Caco-2 (cell line): ENCODE measurements at regions of chr3 and their contacts with region 1.

Region 1: GRCh38 chr3:156535162-156535627 is 19.7 kb downstream of the SSR3 start:
- DNase-seq: peak; percentile 76 to 79
- H3K4me3 ChIP-seq: no peak overlapping the region
- H3K4me3 Mint-ChIP-seq: peak overlapping the region; percentile 1
- H3K27ac Mint-ChIP-seq: peak overlapping the region; percentile 56
- H3K4me1 ChIP-seq: peaks cover 28% of the 10 kb centered on the region
- H3K4me1 Mint-ChIP-seq: peaks cover 15% of the 10 kb centered on the region
- H3K27me3 ChIP-seq: no peaks in the 10 kb centered on the region
- H3K27me3 Mint-ChIP-seq: no peaks in the 10 kb centered on the region
- CTCF ChIP-seq: peak in 1 of 2 experiments; percentile 24

Region 2: DNA sequence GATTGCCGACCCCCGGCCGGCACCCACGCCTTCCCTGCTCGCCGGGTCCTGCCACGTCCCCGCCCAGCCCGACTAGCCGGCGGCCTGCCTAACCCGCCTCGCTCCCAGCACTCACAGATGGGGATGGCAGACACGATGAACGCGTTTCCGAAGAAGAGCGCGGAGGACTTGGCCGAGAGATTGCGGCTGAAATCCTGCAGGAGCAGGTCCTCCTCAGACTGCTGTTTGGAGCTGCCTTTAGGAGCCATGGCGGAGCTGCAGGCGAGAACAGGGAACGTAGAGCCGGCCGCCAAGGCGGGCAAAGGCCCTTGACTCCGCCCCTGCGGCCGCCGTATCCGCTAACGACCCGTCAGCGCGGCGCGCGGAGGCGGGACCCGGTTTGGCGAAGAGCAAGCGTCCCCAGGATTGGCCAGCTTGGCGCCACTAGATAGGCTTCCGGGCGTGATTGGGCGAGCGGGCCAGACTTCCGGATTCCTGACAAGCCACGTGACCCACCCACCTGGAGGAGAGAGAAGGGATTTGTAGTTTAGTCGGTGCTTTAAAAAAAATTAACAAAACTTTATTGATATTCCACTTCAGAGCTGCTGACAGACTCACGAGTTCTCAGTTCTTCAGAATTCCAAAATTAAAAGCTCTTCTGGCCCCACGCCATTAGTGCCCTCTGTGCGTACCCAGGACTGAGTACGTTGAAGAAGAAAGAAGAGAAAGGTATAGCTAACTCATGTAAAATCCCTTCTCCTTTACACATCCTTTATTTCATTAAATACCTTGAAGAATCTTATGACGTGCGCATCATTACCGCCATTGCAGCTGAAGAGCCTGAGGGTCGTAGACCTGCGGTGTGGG is 19.9 kb after region 1 on chr3 and contains the start of gene SSR3:
- CTCF ChIA-PET with region 1: interaction called, 10 read pairs
- POLR2A ChIA-PET with region 1: interaction called, 14 read pairs
- intact Hi-C with region 1: loop called (anchors 1 kb)
- DNase-seq: peak; percentile 99
- H3K4me3 ChIP-seq: peak within 1 kb of the TSS; percentile 99
- H3K4me3 Mint-ChIP-seq: peak within 1 kb of the TSS; percentile 88
- H3K27ac Mint-ChIP-seq: peak within 1 kb of the TSS; percentile 81
- H3K4me1 ChIP-seq: peaks cover 19% of the 10 kb centered on the region; the same call in 1 of the 2 replicates
- H3K4me1 Mint-ChIP-seq: peaks cover 22% of the 10 kb centered on the region
- H3K27me3 ChIP-seq: no peaks in the 10 kb centered on the region
- H3K27me3 Mint-ChIP-seq: no peaks in the 10 kb centered on the region
- CTCF ChIP-seq: no peak
- total RNA-seq, gene SSR3: 177 and 186 TPM in 2 replicates

Region 3: DNA sequence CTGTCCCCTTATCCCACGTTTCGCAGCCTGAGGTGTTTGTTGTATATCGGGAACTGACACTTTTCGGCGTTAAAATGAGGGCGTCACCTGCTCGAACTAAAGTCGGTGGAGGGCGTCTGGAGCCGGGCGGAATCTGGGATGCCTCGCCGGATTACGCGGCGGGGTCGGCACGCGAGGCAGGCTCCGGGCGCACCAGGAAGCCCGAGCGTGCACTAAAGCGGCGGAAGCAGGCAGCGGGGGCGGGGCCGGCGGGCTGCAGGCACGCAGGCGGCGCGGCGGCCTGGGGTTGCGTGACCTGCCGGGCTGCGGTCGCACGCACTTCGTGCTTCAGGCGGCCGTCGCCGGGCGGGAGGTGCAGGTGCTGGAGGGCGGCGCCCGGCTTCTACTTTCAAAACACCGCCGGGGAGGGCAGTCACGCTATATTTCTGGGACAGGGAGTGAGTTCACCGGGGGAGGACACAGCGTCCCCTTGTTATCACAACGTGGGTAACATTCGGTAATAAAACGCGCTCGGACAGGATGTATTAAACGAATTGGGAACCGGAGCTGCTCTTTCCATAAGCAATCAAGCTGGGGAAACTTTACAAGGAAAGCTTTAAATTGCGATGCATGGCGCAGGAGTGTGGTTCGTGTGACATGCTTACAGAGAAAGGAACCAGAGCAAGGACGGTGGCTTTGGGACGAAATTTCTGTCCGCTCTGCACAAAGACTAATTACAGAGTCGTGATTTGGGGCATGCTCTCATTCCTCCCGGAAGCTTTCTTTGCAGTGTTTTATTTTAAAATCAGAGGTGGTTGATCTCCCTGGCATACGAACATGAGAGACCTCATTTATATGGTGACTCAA is 281.8 kb after region 1 on chr3:
- CTCF ChIA-PET with region 1: no interaction called
- POLR2A ChIA-PET with region 1: no interaction called
- intact Hi-C with region 1: loop called (anchors 5 kb)
- DNase-seq: peak; percentile 94 to 96
- H3K4me3 ChIP-seq: peak overlapping the region; percentile 84
- H3K4me3 Mint-ChIP-seq: peak overlapping the region; percentile 90
- H3K27ac Mint-ChIP-seq: peak overlapping the region; percentile 91
- H3K4me1 ChIP-seq: peaks cover 43% of the 10 kb centered on the region
- H3K4me1 Mint-ChIP-seq: peaks cover 14% of the 10 kb centered on the region
- H3K27me3 ChIP-seq: no peaks in the 10 kb centered on the region
- H3K27me3 Mint-ChIP-seq: no peaks in the 10 kb centered on the region
- CTCF ChIP-seq: no peak

Region 4: DNA sequence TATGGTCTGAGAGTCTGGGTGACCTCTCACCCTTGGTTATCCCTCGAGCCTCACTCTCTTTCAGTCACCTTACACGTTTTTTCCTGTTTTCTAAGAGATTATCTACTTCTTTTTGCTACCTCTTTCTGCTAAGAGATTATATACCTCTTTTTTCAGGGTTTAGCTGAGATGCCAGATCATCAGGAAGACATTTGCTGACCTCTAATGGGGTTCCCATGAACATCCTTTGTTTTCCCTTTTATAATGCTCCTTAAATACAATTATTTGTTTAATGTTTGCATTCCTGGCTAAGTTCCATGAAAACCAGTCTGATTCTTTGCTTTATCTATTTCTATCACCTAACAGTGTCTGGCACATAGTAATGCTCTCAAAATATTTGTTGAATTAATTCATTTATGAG is 330.5 kb after region 1 on chr3:
- CTCF ChIA-PET with region 1: no interaction called
- POLR2A ChIA-PET with region 1: no interaction called
- intact Hi-C with region 1: loop called (anchors 1 kb)
- DNase-seq: no peak
- H3K4me3 ChIP-seq: no peak overlapping the region
- H3K4me3 Mint-ChIP-seq: no peak overlapping the region
- H3K27ac Mint-ChIP-seq: no peak overlapping the region
- H3K4me1 ChIP-seq: no peaks in the 10 kb centered on the region
- H3K4me1 Mint-ChIP-seq: no peaks in the 10 kb centered on the region
- H3K27me3 ChIP-seq: no peaks in the 10 kb centered on the region
- H3K27me3 Mint-ChIP-seq: no peaks in the 10 kb centered on the region
- CTCF ChIP-seq: no peak

Region 5: GRCh38 chr3:157081681-157082210 is 546.6 kb after region 1 on chr3:
- CTCF ChIA-PET with region 1: no interaction called
- POLR2A ChIA-PET with region 1: no interaction called
- intact Hi-C with region 1: loop called (anchors 1 kb)
- DNase-seq: peak; percentile 85 to 91
- H3K4me3 ChIP-seq: no peak overlapping the region
- H3K4me3 Mint-ChIP-seq: no peak overlapping the region
- H3K27ac Mint-ChIP-seq: peak overlapping the region; percentile 66
- H3K4me1 ChIP-seq: peaks cover 6% of the 10 kb centered on the region
- H3K4me1 Mint-ChIP-seq: peaks cover 11% of the 10 kb centered on the region
- H3K27me3 ChIP-seq: no peaks in the 10 kb centered on the region
- H3K27me3 Mint-ChIP-seq: no peaks in the 10 kb centered on the region
- CTCF ChIP-seq: peak; percentile 94

Region 6: DNA sequence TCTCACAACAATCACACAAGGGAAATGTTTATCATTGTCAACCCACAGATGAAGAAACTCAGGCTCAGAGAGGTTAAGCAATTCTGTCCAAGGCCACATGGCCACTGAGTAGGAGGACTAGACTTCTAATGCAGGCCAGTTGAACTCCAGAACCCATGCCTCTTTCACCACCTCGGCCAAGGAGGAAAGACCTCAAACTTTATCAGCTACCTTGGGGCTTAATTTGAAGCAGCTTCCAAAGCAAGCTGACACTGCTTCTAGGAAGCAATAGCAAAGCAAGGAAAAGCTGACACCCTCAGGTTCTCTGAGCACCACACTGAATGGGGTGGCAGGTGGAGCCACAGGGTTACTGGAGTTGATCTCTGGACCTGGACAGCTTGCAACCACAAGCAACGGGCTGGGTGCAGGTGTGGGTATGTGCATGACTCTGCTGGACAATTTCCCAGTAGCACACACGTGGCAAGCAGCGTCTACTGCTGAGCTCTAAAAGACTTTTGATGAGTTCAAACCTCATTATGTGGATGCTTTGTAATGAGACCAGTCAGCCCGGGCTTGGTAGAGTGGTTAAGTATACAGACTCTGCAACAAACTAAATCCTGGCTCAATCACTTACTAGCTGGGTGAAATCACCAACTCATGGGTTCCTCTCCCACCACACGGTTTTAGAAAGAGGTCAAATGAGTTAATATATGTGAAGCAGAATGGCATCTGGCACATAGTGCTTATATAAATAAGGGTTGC is 601.6 kb after region 1 on chr3:
- CTCF ChIA-PET with region 1: no interaction called
- POLR2A ChIA-PET with region 1: no interaction called
- intact Hi-C with region 1: loop called (anchors 1 kb)
- DNase-seq: no peak
- H3K4me3 ChIP-seq: no peak overlapping the region
- H3K4me3 Mint-ChIP-seq: no peak overlapping the region
- H3K27ac Mint-ChIP-seq: no peak overlapping the region
- H3K4me1 ChIP-seq: peaks cover 27% of the 10 kb centered on the region
- H3K4me1 Mint-ChIP-seq: no peaks in the 10 kb centered on the region
- H3K27me3 ChIP-seq: no peaks in the 10 kb centered on the region
- H3K27me3 Mint-ChIP-seq: no peaks in the 10 kb centered on the region
- CTCF ChIP-seq: no peak